CD4-positive, alpha-beta memory T cell (primary cell): ENCODE measurements at regions of chr6 and their contacts with region 1.

Region 1: DNA sequence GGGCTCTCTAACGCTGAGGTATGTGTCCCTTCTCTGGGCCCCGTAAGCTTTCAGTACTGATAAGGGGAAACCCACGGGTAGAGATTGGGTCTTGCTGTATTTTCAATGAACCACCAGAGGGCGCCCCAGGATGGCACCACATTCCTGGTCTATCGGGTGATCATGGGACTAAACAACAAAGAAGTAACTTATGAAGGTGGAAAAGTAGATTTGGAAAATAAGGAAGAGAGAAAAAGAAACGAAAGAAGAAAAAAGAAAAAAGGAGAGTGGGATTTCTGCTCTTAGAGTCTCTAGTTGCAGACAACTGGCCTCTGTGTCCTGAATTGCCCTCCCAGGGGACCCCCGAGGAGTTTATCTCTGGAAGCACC is 93.8 kb downstream of the GMPR start:
- DNase-seq: peak; percentile 77 to 86 (median 79)
- H3K4me3 ChIP-seq: no peak overlapping the region
- H3K4me3 Mint-ChIP-seq: no peak overlapping the region
- H3K27ac ChIP-seq: peak overlapping the region; percentile 50
- H3K27ac Mint-ChIP-seq: no peak overlapping the region
- H3K4me1 ChIP-seq: peaks cover 18% of the 10 kb centered on the region
- H3K4me1 Mint-ChIP-seq: peaks cover 0 to 20% (median 8%) of the 10 kb centered on the region in 4 donors
- H3K27me3 ChIP-seq: no peaks in the 10 kb centered on the region
- H3K27me3 Mint-ChIP-seq: no peaks in the 10 kb centered on the region

Region 2: GRCh38 chr6:16319813-16320532 is 12.2 kb before region 1 on chr6:
- CTCF ChIA-PET with region 1: interaction called, 150 read pairs
- POLR2A ChIA-PET with region 1: interaction called, 14 read pairs
- intact Hi-C with region 1: loop called (anchors 1 kb)
- DNase-seq: peak; percentile 80 to 94 (median 86)
- H3K4me3 ChIP-seq: peak overlapping the region; percentile 19 to 41
- H3K4me3 Mint-ChIP-seq: peak overlapping the region; percentile 76 to 89 (median 83)
- H3K27ac ChIP-seq: peak overlapping the region; percentile 82
- H3K27ac Mint-ChIP-seq: peak overlapping the region; percentile 93 to 98 (median 97)
- H3K4me1 ChIP-seq: peaks cover 84% of the 10 kb centered on the region
- H3K4me1 Mint-ChIP-seq: peaks cover 47 to 84% (median 71%) of the 10 kb centered on the region in 4 donors
- H3K27me3 ChIP-seq: no peaks in the 10 kb centered on the region
- H3K27me3 Mint-ChIP-seq: no peaks in the 10 kb centered on the region

Region 3: GRCh38 chr6:16494793-16495192 is 162.6 kb after region 1 on chr6:
- CTCF ChIA-PET with region 1: interaction called, 4 read pairs
- POLR2A ChIA-PET with region 1: no interaction called
- intact Hi-C with region 1: loop called (anchors 1 kb)
- DNase-seq: no peak
- H3K4me3 ChIP-seq: no peak overlapping the region
- H3K4me3 Mint-ChIP-seq: no peak overlapping the region
- H3K27ac ChIP-seq: no peak overlapping the region
- H3K27ac Mint-ChIP-seq: peak overlapping the region in 3 of 7 donors; percentile 56 to 72 (median 58)
- H3K4me1 ChIP-seq: peaks cover 30% of the 10 kb centered on the region
- H3K4me1 Mint-ChIP-seq: peaks cover 33 to 49% (median 46%) of the 10 kb centered on the region in 4 donors
- H3K27me3 ChIP-seq: no peaks in the 10 kb centered on the region
- H3K27me3 Mint-ChIP-seq: no peaks in the 10 kb centered on the region

Region 4: DNA sequence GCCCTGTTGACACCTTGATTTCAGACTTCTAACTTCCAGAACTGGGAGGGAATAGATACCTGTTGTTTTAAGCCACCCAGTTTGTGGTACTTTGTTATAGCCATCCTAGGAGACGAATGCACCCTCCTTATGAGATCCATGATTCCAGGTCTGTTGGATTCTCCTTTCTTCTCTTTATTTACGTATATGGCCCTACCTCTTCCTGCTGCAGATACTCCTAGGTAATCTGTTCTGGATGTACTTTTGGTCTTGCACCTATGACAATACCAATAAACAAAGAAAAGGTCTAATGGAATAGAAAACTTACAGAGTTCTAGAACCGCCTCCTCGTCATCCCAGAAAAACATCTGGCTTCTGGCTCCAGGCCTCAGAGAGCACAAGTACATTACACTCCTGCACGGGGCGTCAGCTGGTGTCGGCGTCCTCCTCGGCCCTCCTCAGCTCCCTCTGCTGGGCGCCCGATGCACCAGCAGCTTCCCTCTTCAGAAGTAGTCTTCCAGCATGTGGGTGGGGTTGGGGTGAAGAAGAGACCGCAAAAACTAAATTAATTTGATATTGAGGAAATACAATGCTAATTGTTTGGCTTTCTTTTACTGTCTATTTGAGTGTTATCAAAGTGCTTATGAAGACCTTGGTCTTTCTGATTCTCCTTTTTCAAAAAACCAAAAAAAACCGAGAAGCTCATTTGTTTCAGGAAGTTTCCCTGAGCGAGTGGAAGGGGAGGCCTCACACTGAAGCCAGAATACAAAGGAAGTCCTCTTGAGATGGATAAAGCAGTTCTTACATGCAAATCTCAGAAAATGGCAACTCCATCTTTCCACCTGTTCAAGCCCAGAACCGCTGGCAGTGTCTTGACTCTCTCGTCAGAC is 438.8 kb after region 1 on chr6:
- CTCF ChIA-PET with region 1: interaction called, 63 read pairs
- POLR2A ChIA-PET with region 1: no interaction called
- intact Hi-C with region 1: loop called (anchors 1 kb)
- DNase-seq: peak; percentile 75 to 79 (median 77)
- H3K4me3 ChIP-seq: no peak overlapping the region
- H3K4me3 Mint-ChIP-seq: peak overlapping the region in 6 of 8 donors; percentile 30 to 71 (median 46)
- H3K27ac ChIP-seq: no peak overlapping the region
- H3K27ac Mint-ChIP-seq: peak overlapping the region; percentile 80 to 95 (median 91)
- H3K4me1 ChIP-seq: peaks cover 36% of the 10 kb centered on the region
- H3K4me1 Mint-ChIP-seq: peaks cover 30 to 56% (median 41%) of the 10 kb centered on the region in 4 donors
- H3K27me3 ChIP-seq: no peaks in the 10 kb centered on the region
- H3K27me3 Mint-ChIP-seq: no peaks in the 10 kb centered on the region

Region 5: GRCh38 chr6:16883414-16883813 is 551.3 kb after region 1 on chr6:
- CTCF ChIA-PET with region 1: no interaction called
- POLR2A ChIA-PET with region 1: no interaction called
- intact Hi-C with region 1: no loop called
- DNase-seq: no peak
- H3K4me3 ChIP-seq: no peak overlapping the region
- H3K4me3 Mint-ChIP-seq: no peak overlapping the region
- H3K27ac ChIP-seq: no peak overlapping the region
- H3K27ac Mint-ChIP-seq: no peak overlapping the region
- H3K4me1 ChIP-seq: no peaks in the 10 kb centered on the region
- H3K4me1 Mint-ChIP-seq: no peaks in the 10 kb centered on the region
- H3K27me3 ChIP-seq: no peaks in the 10 kb centered on the region
- H3K27me3 Mint-ChIP-seq: peaks cover 29 to 41% of the 10 kb centered on the region in 2 donors

Region 6: GRCh38 chr6:16964553-16965501 is 632.7 kb after region 1 on chr6:
- CTCF ChIA-PET with region 1: interaction called, 3 read pairs
- POLR2A ChIA-PET with region 1: no interaction called
- intact Hi-C with region 1: loop called (anchors 5 kb)
- DNase-seq: peak; percentile 42 to 62 (median 54)
- H3K4me3 ChIP-seq: no peak overlapping the region
- H3K4me3 Mint-ChIP-seq: peak overlapping the region in 1 of 8 donors; percentile 18
- H3K27ac ChIP-seq: no peak overlapping the region
- H3K27ac Mint-ChIP-seq: no peak overlapping the region
- H3K4me1 ChIP-seq: peaks cover 7% of the 10 kb centered on the region
- H3K4me1 Mint-ChIP-seq: peaks cover 3 to 7% (median 4%) of the 10 kb centered on the region in 4 donors
- H3K27me3 ChIP-seq: no peaks in the 10 kb centered on the region
- H3K27me3 Mint-ChIP-seq: peaks cover 4 to 14% of the 10 kb centered on the region in 2 donors